CD8-positive, alpha-beta T cell (primary cell): ENCODE measurements at regions of chr11 and their contacts with region 1.

Region 1: GRCh38 chr11:30917859-30918478 is 331.8 kb upstream of the MPPED2 start:
- DNase-seq: peak in 2 of 9 experiments; percentile 13 to 31
- ATAC-seq: no peak
- H3K4me3 ChIP-seq: no peak overlapping the region
- H3K4me3 Mint-ChIP-seq: no peak overlapping the region
- H3K27ac ChIP-seq: no peak overlapping the region
- H3K27ac Mint-ChIP-seq: no peak overlapping the region
- H3K4me1 ChIP-seq: no peaks in the 10 kb centered on the region
- H3K4me1 Mint-ChIP-seq: no peaks in the 10 kb centered on the region
- H3K27me3 ChIP-seq: no peaks in the 10 kb centered on the region
- H3K27me3 Mint-ChIP-seq: peaks cover 3% of the 10 kb centered on the region
- CTCF ChIP-seq: peak; percentile 40

Region 2: GRCh38 chr11:30346068-30346688 is 571.8 kb before region 1 on chr11:
- CTCF ChIA-PET with region 1: interaction called, 5 read pairs
- POLR2A ChIA-PET with region 1: no interaction called
- intact Hi-C with region 1: loop called in 1 of 2 experiments (anchors 2 kb)
- DNase-seq: peak in 2 of 9 experiments; percentile 65 to 75
- ATAC-seq: peak; percentile 58
- H3K4me3 ChIP-seq: no peak overlapping the region
- H3K4me3 Mint-ChIP-seq: no peak overlapping the region
- H3K27ac ChIP-seq: no peak overlapping the region
- H3K27ac Mint-ChIP-seq: no peak overlapping the region
- H3K4me1 ChIP-seq: peaks cover 17% of the 10 kb centered on the region
- H3K4me1 Mint-ChIP-seq: peaks cover 16% of the 10 kb centered on the region
- H3K27me3 ChIP-seq: no peaks in the 10 kb centered on the region
- H3K27me3 Mint-ChIP-seq: no peaks in the 10 kb centered on the region
- CTCF ChIP-seq: peak; percentile 78

Region 3: DNA sequence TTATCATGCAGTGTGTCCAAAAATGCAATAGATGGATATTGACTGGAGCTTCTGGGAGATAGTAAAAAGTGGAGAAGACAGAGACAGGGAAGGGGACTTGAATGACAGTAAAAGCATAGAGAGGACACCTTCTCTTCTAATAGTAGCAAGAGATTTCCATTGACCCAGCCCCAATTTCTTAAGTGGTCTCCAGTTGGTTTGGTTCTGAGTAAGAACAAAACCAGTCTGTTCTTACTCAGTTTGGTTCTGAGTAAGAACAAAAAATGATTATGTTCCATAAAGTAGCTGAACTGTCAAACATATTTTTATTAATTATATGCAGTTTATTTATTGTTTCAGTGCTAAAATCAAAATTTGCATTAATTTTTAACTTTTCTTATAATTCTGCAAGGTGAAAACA is 15.0 kb before region 1 on chr11:
- CTCF ChIA-PET with region 1: no interaction called
- POLR2A ChIA-PET with region 1: no interaction called
- intact Hi-C with region 1: no loop called
- DNase-seq: no peak
- ATAC-seq: no peak
- H3K4me3 ChIP-seq: no peak overlapping the region
- H3K4me3 Mint-ChIP-seq: no peak overlapping the region
- H3K27ac ChIP-seq: no peak overlapping the region
- H3K27ac Mint-ChIP-seq: no peak overlapping the region
- H3K4me1 ChIP-seq: no peaks in the 10 kb centered on the region
- H3K4me1 Mint-ChIP-seq: no peaks in the 10 kb centered on the region
- H3K27me3 ChIP-seq: no peaks in the 10 kb centered on the region
- H3K27me3 Mint-ChIP-seq: peaks cover 3% of the 10 kb centered on the region
- CTCF ChIP-seq: no peak

Region 4: GRCh38 chr11:32056438-32056837 is 1138.5 kb after region 1 on chr11:
- CTCF ChIA-PET with region 1: no interaction called
- POLR2A ChIA-PET with region 1: no interaction called
- intact Hi-C with region 1: no loop called
- DNase-seq: no peak
- ATAC-seq: no peak
- H3K4me3 ChIP-seq: no peak overlapping the region
- H3K4me3 Mint-ChIP-seq: no peak overlapping the region
- H3K27ac ChIP-seq: no peak overlapping the region
- H3K27ac Mint-ChIP-seq: no peak overlapping the region
- H3K4me1 ChIP-seq: no peaks in the 10 kb centered on the region
- H3K4me1 Mint-ChIP-seq: no peaks in the 10 kb centered on the region
- H3K27me3 ChIP-seq: peaks cover 0 to 2% of the 10 kb centered on the region in 2 experiments
- H3K27me3 Mint-ChIP-seq: peaks cover 20% of the 10 kb centered on the region
- CTCF ChIP-seq: no peak

Region 5: GRCh38 chr11:32583459-32584271 is 1665.7 kb after region 1 on chr11 and contains the start of gene EIF3M:
- CTCF ChIA-PET with region 1: no interaction called
- POLR2A ChIA-PET with region 1: no interaction called
- intact Hi-C with region 1: no loop called
- DNase-seq: peak; percentile 91 to 98 (median 95)
- ATAC-seq: peak; percentile 98
- H3K4me3 ChIP-seq: peak within 1 kb of the TSS; percentile 80 to 93
- H3K4me3 Mint-ChIP-seq: peak within 1 kb of the TSS; percentile 99
- H3K27ac ChIP-seq: peak within 1 kb of the TSS; percentile 81 to 86
- H3K27ac Mint-ChIP-seq: peak within 1 kb of the TSS; percentile 99
- H3K4me1 ChIP-seq: peaks cover 29% of the 10 kb centered on the region
- H3K4me1 Mint-ChIP-seq: peaks cover 39% of the 10 kb centered on the region
- H3K27me3 ChIP-seq: no peaks in the 10 kb centered on the region
- H3K27me3 Mint-ChIP-seq: no peaks in the 10 kb centered on the region
- CTCF ChIP-seq: no peak
- total RNA-seq, gene EIF3M: 269 to 274 TPM